Tibial artery (tissue), 4 donors: ENCODE measurements at regions of chr21 and their contacts with region 1.

Region 1: DNA sequence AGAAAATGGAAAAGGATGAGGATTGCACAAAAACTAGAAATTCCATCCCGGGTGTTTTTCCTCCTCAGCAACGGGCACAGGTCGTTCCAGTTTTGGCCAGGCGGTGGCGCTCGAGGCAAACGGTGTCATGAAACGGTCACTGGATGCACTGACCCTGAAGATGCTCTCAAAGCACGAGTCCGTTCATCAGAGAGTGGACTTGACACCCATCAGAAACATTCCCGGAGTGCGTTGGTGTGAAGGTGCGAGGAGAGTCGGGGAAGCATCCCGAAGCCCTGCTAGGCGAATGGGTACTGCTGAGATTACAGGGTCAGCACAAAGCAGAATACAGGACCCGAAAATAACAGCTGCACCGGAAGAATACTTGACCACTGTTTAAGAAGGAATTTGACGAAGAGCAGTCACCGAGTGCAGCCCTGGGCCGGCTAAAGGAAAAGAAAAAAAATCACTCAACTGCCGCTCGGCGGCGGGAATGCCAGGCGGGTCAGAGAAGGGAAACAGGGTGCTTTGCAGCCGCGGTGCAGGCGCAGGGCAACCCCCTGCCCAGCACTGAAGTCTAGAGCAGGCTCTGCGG is 71.7 kb upstream of the ETS2 start:
- DNase-seq: peak; percentile 93 to 94
- H3K4me3 ChIP-seq: peak overlapping the region; percentile 31 to 48
- H3K27ac ChIP-seq: peak overlapping the region; percentile 56 to 58
- H3K4me1 ChIP-seq: peaks cover 0 to 20% (median 4%) of the 10 kb centered on the region in 4 donors
- H3K27me3 ChIP-seq: no peaks in the 10 kb centered on the region
- CTCF ChIP-seq: peak; percentile 90 to 97

Region 2: GRCh38 chr21:38766987-38767722 is 33.1 kb after region 1 on chr21:
- intact Hi-C with region 1: no loop called
- DNase-seq: no peak
- H3K4me3 ChIP-seq: no peak overlapping the region
- H3K27ac ChIP-seq: peak overlapping the region in 1 of 2 donors; percentile 85
- H3K4me1 ChIP-seq: peaks cover 0 to 25% (median 7%) of the 10 kb centered on the region in 4 donors
- H3K27me3 ChIP-seq: no peaks in the 10 kb centered on the region
- CTCF ChIP-seq: no peak

Region 3: DNA sequence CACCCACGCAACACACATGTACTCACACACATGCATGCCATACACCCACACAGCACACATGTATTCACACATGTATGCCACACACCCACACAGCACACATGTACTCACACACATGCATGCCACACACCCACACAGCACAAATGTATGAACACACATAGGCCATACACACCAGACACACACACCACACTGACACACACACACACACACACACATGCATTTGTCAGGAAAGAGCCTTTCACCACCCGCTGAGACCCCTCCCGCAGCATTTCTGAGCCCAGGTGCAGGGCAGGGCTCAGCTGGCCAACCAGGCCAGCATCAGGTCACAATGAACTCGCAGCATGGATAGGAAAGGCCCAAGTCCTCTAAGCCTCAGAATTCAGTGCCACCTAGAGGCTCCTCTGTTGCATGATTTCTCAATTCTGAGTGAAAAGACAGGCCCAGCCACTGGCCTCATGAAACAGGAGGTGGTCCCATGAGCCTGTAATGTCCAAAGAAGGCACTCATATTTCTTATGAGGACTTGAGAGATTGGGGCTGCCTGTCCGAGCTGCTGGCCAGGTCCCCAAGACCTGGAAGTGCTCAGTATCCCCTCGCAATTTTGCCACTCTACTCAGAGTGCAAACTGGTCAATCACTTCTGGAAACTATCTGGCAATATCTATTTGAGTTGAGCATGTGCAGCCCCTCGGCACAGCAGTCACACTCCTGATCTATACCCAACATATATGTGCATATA is 391.9 kb after region 1 on chr21:
- intact Hi-C with region 1: loop called (anchors 5 kb)
- DNase-seq: peak in 1 of 2 donors; percentile 51
- H3K4me3 ChIP-seq: no peak overlapping the region
- H3K27ac ChIP-seq: no peak overlapping the region
- H3K4me1 ChIP-seq: peaks cover 0 to 15% (median 5%) of the 10 kb centered on the region in 4 donors
- H3K27me3 ChIP-seq: no peaks in the 10 kb centered on the region
- CTCF ChIP-seq: peak; percentile 63 to 72